CD4-positive, alpha-beta T cell (primary cell): ENCODE measurements at regions of chr1 and their contacts with region 1.

Region 1: GRCh38 chr1:170252851-170253579 is 107.3 kb downstream of the NTMT2 start:
- DNase-seq: no peak
- ATAC-seq: no peak
- H3K4me3 ChIP-seq: no peak overlapping the region
- H3K4me3 Mint-ChIP-seq: no peak overlapping the region
- H3K27ac ChIP-seq: no peak overlapping the region
- H3K27ac Mint-ChIP-seq: no peak overlapping the region
- H3K4me1 ChIP-seq: no peaks in the 10 kb centered on the region
- H3K4me1 Mint-ChIP-seq: no peaks in the 10 kb centered on the region
- H3K27me3 ChIP-seq: no peaks in the 10 kb centered on the region
- H3K27me3 Mint-ChIP-seq: no peaks in the 10 kb centered on the region
- CTCF ChIP-seq: no peak

Region 2: GRCh38 chr1:170277985-170278384 is 25.0 kb after region 1 on chr1:
- CTCF ChIA-PET with region 1: no interaction called
- POLR2A ChIA-PET with region 1: no interaction called
- intact Hi-C with region 1: loop called in 1 of 2 experiments (anchors 1 kb)
- DNase-seq: no peak
- ATAC-seq: no peak
- H3K4me3 ChIP-seq: no peak overlapping the region
- H3K4me3 Mint-ChIP-seq: no peak overlapping the region
- H3K27ac ChIP-seq: no peak overlapping the region
- H3K27ac Mint-ChIP-seq: no peak overlapping the region
- H3K4me1 ChIP-seq: no peaks in the 10 kb centered on the region
- H3K4me1 Mint-ChIP-seq: no peaks in the 10 kb centered on the region
- H3K27me3 ChIP-seq: peaks cover 5 to 14% of the 10 kb centered on the region in 2 experiments
- H3K27me3 Mint-ChIP-seq: peaks cover 41% of the 10 kb centered on the region
- CTCF ChIP-seq: no peak